ENCODE measurements at regions of chr16 and their contacts with region 1.

Region 1: GRCh38 chr16:81204798-81205680 is 33.5 kb upstream of the BCO1 start:
- DNase-seq: peak in 4 of 10 donors; percentile 31 to 66 (median 54)

Region 2: DNA sequence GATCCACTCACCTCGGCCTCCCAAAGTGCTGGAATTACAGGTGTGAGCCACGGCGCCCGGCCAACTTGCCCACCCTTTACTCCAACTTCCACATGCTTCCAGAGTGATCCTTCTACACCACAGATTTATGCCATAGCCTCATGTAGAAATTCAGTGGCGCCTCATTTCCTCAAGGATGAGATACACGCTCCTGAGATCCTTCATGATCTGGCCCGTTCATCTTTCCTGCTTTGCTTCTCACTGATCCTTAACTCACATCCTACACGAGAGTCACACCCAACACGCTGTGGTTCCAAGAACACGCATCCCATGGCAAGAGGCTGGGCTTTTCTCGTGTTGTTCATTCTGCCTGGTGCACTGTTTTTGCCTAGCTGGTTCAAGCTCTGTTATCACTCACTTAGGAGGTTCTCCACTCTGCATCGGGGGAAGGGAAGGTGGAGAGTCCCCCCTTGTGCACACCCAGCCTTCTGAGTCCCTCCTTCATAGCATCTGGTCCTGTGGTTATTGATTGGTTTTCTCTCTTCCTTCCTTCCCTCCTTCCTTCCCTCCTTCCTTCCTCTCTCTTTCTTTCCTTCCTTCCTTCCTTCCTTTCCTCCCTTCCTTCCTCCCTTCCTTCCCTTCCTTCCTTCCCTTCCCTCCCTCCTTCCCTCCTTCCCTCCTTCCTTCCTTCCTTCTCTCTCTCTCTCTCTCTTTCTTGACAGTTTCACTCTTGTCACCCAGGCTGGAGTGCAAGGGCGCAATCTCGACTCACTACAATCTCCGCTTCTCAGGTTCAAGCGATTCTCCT is 76.1 kb before region 1 on chr16:
- intact Hi-C with region 1: no loop called
- DNase-seq: no peak

Region 3: GRCh38 chr16:81140930-81141780 is 63.9 kb before region 1 on chr16:
- intact Hi-C with region 1: no loop called
- DNase-seq: no peak

Region 4: DNA sequence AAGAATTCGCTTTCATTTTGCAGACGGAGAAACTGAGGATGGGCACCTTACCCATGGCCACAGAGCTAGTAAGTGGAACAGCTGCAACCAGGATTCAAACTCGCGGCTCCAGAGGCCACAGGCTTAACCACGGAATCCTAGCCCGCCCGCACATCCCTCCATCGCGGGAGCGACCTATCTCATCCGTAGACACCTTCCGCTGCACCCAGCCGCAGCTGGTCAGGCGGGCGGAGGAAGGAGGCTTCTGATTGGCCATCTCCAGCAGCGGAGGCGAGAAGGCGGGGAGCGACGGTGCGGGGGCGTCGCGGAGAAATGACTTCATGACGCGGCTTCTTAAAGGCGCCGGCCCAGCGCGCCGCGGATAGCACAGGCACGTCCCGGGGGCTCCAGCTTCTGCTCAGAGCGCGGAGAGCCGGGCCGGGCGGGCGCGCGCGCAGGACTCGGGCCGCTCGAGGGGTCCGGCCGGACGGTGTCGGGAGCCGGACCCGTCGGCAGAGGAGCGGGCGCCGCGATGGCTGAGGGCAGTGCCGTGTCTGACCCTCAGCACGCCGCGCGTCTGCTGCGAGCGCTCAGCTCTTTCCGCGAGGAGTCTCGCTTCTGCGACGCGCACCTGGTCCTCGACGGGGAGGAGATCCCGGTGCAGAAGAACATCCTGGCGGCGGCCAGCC is 109.7 kb after region 1 on chr16 and contains the start of gene GAN:
- intact Hi-C with region 1: loop called (anchors 10 kb)
- DNase-seq: peak; percentile 94 to 99 (median 96)

Region 5: DNA sequence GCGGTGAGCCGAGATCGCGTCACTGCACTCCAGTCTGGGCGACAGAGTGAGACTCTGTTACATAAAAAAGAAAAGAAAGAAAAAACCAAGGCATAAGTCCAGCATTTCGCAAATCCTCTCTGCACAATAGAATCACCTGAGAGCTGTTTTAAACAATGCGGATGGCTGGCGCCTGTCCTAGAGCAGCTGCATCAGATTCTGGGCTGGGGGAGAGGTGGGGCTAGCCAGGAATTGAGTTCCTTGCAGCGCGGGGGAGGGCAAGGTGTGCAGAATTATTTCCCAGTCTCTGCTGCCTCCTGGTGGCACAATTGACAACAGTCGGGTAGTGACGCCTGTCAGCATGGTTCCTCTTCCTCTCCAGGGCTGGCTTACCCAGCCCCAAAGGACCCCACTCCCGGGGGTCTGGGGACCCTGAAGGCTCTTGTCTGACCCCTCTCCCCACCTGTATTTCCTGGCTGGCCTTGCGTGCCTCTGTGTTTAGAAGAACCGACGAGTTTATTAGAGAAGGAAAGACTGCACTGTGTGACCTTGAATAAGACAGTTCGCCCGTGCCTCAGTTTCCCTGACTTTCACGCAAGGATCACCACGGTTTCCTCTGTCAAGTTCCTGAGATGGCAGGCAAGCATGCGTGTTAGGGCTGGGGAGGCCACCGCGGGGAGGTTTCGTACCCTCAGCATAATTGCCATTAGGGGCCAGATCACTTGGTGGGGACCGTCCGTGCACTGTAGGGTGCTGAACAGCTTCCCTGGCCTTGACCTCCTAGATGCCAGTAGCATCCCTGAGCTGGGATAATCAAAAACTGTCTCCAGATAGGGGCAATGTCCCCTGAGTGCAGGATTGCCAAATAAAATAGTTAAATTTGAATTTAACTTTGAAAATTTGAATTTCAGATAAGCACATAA is 533.1 kb after region 1 on chr16:
- intact Hi-C with region 1: loop called (anchors 10 kb)
- DNase-seq: peak; percentile 66 to 96 (median 80)